ENCODE measurements at regions of chr1 and their contacts with region 1.

Region 1: DNA sequence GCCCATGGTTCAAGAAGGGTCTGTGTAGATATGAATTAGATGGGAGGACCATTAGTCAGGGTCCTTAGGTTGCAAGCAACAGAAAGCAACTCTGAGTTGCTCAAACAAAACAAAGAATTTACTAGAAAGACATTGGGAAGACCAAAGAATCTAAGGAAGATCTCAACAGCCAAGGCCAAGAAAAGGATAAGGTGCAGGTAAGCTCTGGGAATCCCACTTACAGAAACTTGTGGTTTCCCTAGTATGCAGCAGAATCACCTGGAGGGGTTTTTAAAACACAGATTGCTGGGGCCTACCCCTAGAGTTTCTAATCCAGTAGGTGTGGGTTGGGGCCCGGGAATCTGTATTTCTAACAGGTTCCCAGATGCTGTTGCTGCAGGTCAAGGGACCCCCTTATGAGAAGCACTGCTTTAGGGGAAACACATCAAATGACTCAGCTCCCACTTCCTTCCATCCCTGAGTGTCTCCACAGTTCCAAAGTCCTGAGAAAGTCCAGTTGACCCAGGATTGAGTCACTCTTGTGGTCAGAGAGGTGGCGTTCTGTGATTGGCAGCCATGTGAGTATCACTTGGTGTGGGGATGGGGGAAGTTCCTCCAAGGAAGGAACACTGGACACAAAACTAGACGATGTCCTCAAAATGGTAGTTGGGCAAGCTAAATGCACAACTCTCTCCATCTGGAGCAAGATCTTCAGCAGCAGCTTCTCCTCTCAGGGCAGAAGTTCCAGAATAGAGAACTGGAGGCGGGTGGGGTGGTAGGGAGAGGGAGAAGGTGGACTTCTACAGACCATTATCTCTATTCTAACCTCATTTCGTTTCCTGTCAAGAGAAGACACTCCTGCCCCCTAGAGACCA is 24.2 kb upstream of the EYA3 start:
- DNase-seq: peak in 2 of 14 experiments; percentile 71 to 78
- ATAC-seq: no peak
- H3K4me3 ChIP-seq: no peak overlapping the region
- H3K4me3 Mint-ChIP-seq: no peak overlapping the region
- H3K27ac ChIP-seq: no peak overlapping the region
- H3K27ac Mint-ChIP-seq: no peak overlapping the region
- H3K4me1 ChIP-seq: peaks cover 12% of the 10 kb centered on the region
- H3K4me1 Mint-ChIP-seq: peaks cover 6% of the 10 kb centered on the region
- H3K27me3 ChIP-seq: no peaks in the 10 kb centered on the region
- H3K27me3 Mint-ChIP-seq: peaks cover 3% of the 10 kb centered on the region
- CTCF ChIP-seq: no peak

Region 2: GRCh38 chr1:28156821-28157220 is 44.2 kb after region 1 on chr1:
- CTCF ChIA-PET with region 1: no interaction called
- POLR2A ChIA-PET with region 1: no interaction called
- intact Hi-C with region 1: loop called in 1 of 2 experiments (anchors 5 kb)
- DNase-seq: peak in 1 of 14 experiments; percentile 44
- ATAC-seq: no peak
- H3K4me3 ChIP-seq: no peak overlapping the region
- H3K4me3 Mint-ChIP-seq: no peak overlapping the region
- H3K27ac ChIP-seq: no peak overlapping the region
- H3K27ac Mint-ChIP-seq: no peak overlapping the region
- H3K4me1 ChIP-seq: no peaks in the 10 kb centered on the region
- H3K4me1 Mint-ChIP-seq: no peaks in the 10 kb centered on the region
- H3K27me3 ChIP-seq: no peaks in the 10 kb centered on the region
- H3K27me3 Mint-ChIP-seq: peaks cover 12% of the 10 kb centered on the region
- CTCF ChIP-seq: no peak

Region 3: DNA sequence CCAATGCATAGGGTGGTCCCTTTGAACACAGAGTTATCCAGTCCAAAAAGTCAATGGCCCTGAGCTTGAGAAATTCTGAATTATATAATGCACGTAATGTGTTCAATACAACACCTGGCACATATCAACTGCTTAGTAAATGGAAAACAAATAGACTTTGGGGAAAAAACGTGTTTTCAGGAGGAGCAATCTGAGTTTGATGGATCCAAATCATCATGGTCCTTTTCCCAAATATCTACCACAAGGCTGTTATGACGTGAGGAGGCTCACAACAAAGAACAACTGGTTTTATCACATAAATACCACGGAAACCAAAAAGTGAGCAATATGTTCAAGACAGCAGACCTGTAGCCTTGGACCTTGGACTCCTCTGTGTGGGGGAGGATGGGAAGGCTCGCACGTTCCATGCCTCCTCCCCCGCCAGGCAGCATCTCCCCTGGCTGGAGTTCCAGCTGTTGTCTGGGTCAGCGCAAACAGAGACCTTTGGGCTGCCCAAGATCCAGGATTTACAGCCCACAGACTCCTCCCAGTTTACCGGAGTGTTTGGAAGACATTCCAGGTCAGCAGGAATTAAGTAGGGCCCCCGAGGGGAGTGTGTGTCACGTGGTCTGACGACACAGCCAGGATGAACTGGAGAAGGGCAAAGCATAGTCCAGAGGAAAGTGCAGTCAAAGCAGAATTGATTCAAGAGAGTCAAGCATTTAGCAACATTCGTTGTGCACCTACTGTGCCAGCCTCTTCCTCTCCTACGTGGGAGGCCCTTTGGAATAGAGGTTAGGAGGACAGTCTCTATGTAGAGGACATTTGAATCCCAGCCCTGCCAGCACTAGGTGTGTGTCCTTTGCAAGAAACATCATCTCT is 184.0 kb after region 1 on chr1:
- CTCF ChIA-PET with region 1: no interaction called
- POLR2A ChIA-PET with region 1: no interaction called
- intact Hi-C with region 1: loop called in 1 of 2 experiments (anchors 10 kb)
- DNase-seq: no peak
- ATAC-seq: no peak
- H3K4me3 ChIP-seq: no peak overlapping the region
- H3K4me3 Mint-ChIP-seq: no peak overlapping the region
- H3K27ac ChIP-seq: no peak overlapping the region
- H3K27ac Mint-ChIP-seq: no peak overlapping the region
- H3K4me1 ChIP-seq: no peaks in the 10 kb centered on the region
- H3K4me1 Mint-ChIP-seq: no peaks in the 10 kb centered on the region
- H3K27me3 ChIP-seq: no peaks in the 10 kb centered on the region
- H3K27me3 Mint-ChIP-seq: no peaks in the 10 kb centered on the region
- CTCF ChIP-seq: no peak

Measured in CD4-positive, alpha-beta T cell (primary cell).